Right ventricle myocardium superior (tissue), 1 donor: ENCODE measurements at regions of chr11 and their contacts with region 1.

Region 1: GRCh38 chr11:77547863-77548551 is 41.7 kb upstream of the AQP11 start:
- DNase-seq: no peak
- ATAC-seq: peak; percentile 60

Region 2: GRCh38 chr11:77127232-77127911 is 420.6 kb before region 1 on chr11:
- intact Hi-C with region 1: loop called (anchors 5 kb)
- DNase-seq: peak; percentile 73
- ATAC-seq: peak; percentile 81

Region 3: DNA sequence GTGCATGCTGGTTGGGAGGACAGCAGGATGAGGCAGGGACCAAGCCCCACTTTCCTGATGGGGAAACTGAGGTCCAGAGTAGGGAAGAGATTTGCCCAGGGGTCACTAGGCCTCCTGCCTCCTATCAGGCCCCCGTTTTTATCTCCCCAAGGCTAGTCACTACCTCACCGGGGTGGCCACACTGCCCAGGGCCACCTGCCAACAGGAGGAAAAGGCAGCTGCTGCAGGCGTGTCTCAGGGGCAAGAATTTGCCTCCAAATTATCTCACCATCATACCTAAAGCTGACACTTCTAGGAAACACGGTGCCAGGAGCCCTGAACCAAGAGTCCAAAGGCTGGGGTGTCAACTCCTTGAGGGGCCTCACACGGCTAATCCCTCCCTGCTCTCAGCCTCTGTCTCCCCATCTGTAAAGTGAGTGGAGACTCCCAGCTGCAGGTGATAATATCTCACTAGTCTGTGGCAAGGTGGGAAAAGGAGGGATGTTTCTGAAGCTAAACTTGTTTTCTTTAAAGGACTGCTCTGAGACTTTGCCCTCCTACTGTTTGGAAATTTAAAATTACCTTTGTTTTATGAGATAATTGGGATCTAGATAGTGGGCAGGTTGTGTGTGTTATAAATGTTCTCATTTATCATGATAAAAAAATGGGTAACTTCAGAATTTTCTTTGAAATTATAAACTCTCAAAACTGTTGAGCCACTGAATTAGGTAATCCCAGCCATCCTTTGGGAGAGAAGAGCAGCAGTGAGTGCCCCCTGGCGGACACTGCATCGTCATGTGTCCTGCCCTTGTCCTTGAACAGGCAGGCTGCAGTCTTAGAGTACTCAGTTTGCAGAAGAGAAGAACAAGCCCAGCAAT is 360.0 kb before region 1 on chr11:
- intact Hi-C with region 1: loop called (anchors 5 kb)
- DNase-seq: peak; percentile 92
- ATAC-seq: peak; percentile 94